HEK293 (cell line): ENCODE measurements at regions of chrX and their contacts with region 1.

Region 1: GRCh38 chrX:152821145-152821765 is 9.3 kb downstream of the CETN2 start:
- H3K4me3 ChIP-seq: no peak overlapping the region
- H3K27ac ChIP-seq: no peak overlapping the region
- H3K4me1 ChIP-seq: no peaks in the 10 kb centered on the region
- CTCF ChIP-seq: peak; percentile 75

Region 2: DNA sequence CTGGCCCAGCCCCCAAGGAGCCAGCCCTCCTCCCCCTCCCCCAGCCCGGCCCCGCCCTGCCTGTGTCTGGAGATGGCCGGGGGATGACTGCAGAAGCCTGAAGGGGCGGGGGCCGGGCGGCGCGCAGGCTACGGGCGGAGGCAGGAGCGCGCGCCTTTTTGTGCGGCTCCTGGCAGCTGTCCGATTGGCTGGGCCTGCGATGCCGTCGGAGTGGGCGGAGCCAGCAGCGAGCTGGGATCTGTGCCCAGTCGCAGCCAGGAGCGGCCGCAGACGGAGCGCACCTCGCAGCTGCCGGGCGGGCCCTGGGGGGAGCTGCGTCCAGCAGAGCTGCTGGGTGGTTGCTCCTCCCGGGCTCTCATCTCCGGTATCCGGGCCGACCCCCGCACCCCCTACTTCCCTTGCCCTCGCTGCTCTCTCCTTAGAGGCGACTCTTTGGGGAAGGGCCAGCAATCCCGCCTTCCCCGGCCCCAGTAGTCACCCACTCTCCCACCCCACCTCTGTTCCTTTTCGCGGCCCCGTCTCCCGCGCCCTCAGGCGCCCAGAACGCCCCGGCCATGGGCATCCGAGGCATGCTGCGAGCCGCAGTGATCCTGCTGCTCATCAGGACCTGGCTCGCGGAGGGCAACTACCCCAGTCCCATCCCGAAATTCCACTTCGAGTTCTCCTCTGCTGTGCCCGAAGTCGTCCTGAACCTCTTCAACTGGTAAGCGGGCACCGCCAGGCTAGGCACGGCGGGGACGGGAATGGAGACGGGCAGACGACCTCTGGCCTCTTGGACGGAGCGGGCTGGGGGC is 183.4 kb before region 1 on chrX and contains the start of gene GABRQ:
- CTCF ChIA-PET with region 1: interaction called, 39 read pairs
- POLR2A ChIA-PET with region 1: interaction called, 4 read pairs
- H3K4me3 ChIP-seq: peak within 1 kb of the TSS; percentile 49
- H3K27ac ChIP-seq: no peak within 1 kb of the TSS
- H3K4me1 ChIP-seq: no peaks in the 10 kb centered on the region
- CTCF ChIP-seq: no peak

Region 3: DNA sequence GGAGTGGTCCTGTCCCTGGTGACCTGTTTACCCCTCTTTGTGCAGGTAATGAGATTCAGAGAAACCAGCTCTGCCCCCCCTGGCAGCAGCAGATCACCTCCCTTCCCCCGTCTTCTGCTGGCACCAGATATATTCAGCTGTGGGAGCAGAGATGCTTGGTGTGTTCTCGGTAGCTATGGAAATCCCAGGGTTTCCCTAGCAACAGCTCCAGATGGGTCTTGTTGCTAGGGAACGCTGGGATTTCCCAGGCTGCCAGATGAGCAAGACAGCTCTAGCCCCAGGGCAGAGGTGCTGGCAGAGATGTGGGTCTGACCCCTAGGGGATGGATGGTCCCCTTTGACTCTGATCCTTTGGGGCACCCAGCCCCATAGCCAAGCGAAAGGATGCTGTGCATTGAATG is 10.9 kb before region 1 on chrX:
- CTCF ChIA-PET with region 1: interaction called, 24 read pairs
- POLR2A ChIA-PET with region 1: no interaction called
- H3K4me3 ChIP-seq: no peak overlapping the region
- H3K27ac ChIP-seq: no peak overlapping the region
- H3K4me1 ChIP-seq: no peaks in the 10 kb centered on the region
- CTCF ChIP-seq: no peak

Region 4: GRCh38 chrX:152850465-152850864 is 29.2 kb after region 1 on chrX:
- CTCF ChIA-PET with region 1: no interaction called
- POLR2A ChIA-PET with region 1: no interaction called
- H3K4me3 ChIP-seq: no peak overlapping the region
- H3K27ac ChIP-seq: no peak overlapping the region
- H3K4me1 ChIP-seq: no peaks in the 10 kb centered on the region
- CTCF ChIP-seq: no peak

Region 5: GRCh38 chrX:152997337-152997736 is 176.1 kb after region 1 on chrX:
- CTCF ChIA-PET with region 1: no interaction called
- POLR2A ChIA-PET with region 1: no interaction called
- H3K4me3 ChIP-seq: no peak overlapping the region
- H3K27ac ChIP-seq: no peak overlapping the region
- H3K4me1 ChIP-seq: no peaks in the 10 kb centered on the region
- CTCF ChIP-seq: no peak